Activated CD8-positive, alpha-beta T cell treated with anti-CD3 and anti-CD28 coated beads for 36 hours (primary cell): ENCODE measurements at regions of chr5 and their contacts with region 1.

Region 1: GRCh38 chr5:95646554-95647431 is at the start of gene RFESD:
- DNase-seq: peak; percentile 99
- ATAC-seq: peak; percentile 95
- H3K4me3 Mint-ChIP-seq: peak within 1 kb of the TSS; percentile 81
- H3K27ac Mint-ChIP-seq: peak within 1 kb of the TSS; percentile 90
- H3K4me1 Mint-ChIP-seq: peaks cover 36% of the 10 kb centered on the region
- H3K27me3 Mint-ChIP-seq: no peaks in the 10 kb centered on the region
- CTCF ChIP-seq: no peak
- total RNA-seq, gene RFESD: 9.2 to 9.8 TPM

Region 2: GRCh38 chr5:95600557-95600956 is 46.2 kb before region 1 on chr5:
- CTCF ChIA-PET with region 1: no interaction called
- POLR2A ChIA-PET with region 1: no interaction called
- intact Hi-C with region 1: no loop called
- DNase-seq: no peak
- ATAC-seq: no peak
- H3K4me3 Mint-ChIP-seq: no peak overlapping the region
- H3K27ac Mint-ChIP-seq: no peak overlapping the region
- H3K4me1 Mint-ChIP-seq: no peaks in the 10 kb centered on the region
- H3K27me3 Mint-ChIP-seq: no peaks in the 10 kb centered on the region
- CTCF ChIP-seq: no peak

Region 3: DNA sequence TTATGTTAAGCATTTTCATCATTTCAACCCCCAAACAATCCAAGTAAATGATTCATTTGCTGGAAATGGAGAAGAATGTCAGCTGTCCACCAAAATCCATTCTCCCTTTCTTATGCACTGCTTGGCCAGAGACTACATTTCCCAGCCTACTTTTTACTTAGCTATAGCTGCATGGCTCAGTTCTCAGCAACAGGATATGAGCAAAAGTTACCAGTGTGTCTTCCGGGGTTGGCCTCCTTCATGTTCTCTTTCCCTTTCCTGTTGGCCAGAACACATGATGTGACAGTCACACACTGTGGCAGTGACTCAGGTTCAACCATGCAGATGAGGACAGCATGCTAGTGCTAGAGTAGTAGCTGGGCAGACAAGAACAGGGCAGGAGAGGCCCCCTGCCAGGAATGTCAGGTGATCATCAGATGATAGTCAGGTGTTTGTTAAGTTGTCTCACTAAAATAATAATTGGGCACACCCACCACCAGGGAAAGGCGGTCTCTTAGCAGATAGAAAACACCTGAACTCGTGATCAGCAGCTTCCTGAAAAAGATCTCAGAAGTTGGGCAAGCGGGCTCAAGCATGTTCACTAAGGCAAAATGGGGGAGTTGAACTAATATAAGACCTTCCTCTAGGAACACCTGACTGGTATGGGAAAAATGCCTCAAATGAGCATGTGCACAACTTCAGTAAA is 14.7 kb before region 1 on chr5:
- CTCF ChIA-PET with region 1: interaction called, 15 read pairs
- POLR2A ChIA-PET with region 1: interaction called, 5 read pairs
- intact Hi-C with region 1: no loop called
- DNase-seq: peak; percentile 87
- ATAC-seq: peak; percentile 99
- H3K4me3 Mint-ChIP-seq: peak overlapping the region; percentile 34
- H3K27ac Mint-ChIP-seq: peak overlapping the region; percentile 96
- H3K4me1 Mint-ChIP-seq: peaks cover 18% of the 10 kb centered on the region
- H3K27me3 Mint-ChIP-seq: peaks cover 3% of the 10 kb centered on the region
- CTCF ChIP-seq: no peak

Region 4: DNA sequence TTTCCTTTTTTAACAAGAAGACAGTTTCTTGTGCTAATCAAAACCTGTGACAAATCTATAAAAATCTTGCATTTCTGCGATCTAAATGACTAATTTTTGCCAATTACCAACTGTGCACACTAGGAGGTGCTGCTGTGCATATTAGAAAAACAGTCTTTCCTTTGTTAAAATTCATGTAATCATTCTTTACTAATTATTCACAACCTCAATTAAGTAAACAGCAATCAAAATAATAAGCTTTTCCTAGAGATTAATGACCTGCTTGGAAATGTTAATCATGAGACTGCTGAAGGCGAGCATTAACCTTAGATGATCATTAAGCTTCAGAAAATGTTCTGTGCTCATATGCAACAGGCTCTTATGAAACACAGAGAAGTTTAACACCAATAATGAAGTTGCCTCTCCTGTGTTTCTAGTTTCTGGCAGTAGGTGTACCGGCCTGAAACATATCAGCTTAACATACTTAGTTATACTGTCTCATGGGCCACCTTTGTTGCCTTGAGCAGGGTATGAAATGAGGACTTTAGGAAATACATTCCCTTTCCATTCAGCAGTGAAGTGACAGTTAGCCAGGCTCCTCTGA is 17.5 kb after region 1 on chr5:
- CTCF ChIA-PET with region 1: interaction called, 47 read pairs
- POLR2A ChIA-PET with region 1: interaction called, 3 read pairs
- intact Hi-C with region 1: no loop called
- DNase-seq: peak; percentile 52
- ATAC-seq: peak; percentile 61
- H3K4me3 Mint-ChIP-seq: no peak overlapping the region
- H3K27ac Mint-ChIP-seq: no peak overlapping the region
- H3K4me1 Mint-ChIP-seq: peaks cover 3% of the 10 kb centered on the region
- H3K27me3 Mint-ChIP-seq: no peaks in the 10 kb centered on the region
- CTCF ChIP-seq: peak; percentile 92

Region 5: DNA sequence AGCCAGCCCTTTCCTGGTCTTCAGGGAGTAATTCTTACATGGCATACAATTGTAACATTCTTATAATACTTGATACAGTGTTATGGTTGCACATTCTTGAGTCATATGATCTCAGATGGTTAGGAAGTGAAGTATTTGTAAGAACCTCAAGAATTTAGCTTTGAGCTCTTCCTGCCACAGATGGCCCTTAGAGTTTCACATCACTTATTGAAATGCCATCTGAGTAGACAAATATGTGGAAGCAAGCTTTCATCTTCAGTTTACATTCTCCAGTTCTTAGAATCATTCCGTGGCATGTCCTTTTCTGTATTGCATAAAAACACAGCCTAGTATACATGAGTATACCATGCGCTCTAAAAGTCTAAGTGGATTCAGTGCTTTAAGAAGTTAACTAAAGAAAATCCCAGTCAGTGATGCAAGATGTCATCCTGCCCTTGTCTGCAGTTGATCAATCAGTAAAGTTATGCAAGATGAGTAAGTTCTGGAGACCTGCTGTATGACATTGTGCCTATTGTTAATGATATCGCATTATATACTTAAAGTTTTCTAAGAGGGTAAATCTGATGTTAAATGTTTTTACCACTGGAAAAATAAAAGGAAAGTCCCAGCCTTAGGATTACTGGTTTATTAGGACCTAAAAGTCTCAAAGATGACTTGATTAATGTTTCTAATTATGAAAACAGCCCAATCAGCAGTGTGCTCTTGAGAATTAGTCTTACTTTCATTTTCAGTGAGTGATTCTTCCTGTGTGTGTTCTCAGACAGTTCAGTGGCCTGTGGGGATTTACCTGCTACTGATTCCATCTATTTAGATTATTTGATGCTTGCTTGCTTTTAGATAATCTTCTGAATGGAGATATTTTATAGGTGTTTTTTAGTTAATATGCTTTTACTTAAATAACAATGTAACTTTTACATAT is 113.7 kb after region 1 on chr5:
- CTCF ChIA-PET with region 1: no interaction called
- POLR2A ChIA-PET with region 1: no interaction called
- intact Hi-C with region 1: loop called (anchors 2 kb)
- DNase-seq: peak; percentile 51
- ATAC-seq: peak; percentile 89
- H3K4me3 Mint-ChIP-seq: peak overlapping the region; percentile 66
- H3K27ac Mint-ChIP-seq: peak overlapping the region; percentile 90
- H3K4me1 Mint-ChIP-seq: peaks cover 29% of the 10 kb centered on the region
- H3K27me3 Mint-ChIP-seq: no peaks in the 10 kb centered on the region
- CTCF ChIP-seq: no peak

Region 6: GRCh38 chr5:95822542-95823181 is 175.9 kb after region 1 on chr5 and contains the start of gene GLRX:
- CTCF ChIA-PET with region 1: interaction called, 3 read pairs
- POLR2A ChIA-PET with region 1: interaction called, 5 read pairs
- intact Hi-C with region 1: loop called (anchors 5 kb)
- DNase-seq: peak; percentile 73
- ATAC-seq: peak; percentile 15
- H3K4me3 Mint-ChIP-seq: peak within 1 kb of the TSS; percentile 87
- H3K27ac Mint-ChIP-seq: peak within 1 kb of the TSS; percentile 93
- H3K4me1 Mint-ChIP-seq: peaks cover 44% of the 10 kb centered on the region
- H3K27me3 Mint-ChIP-seq: no peaks in the 10 kb centered on the region
- CTCF ChIP-seq: no peak
- total RNA-seq, gene GLRX: 28.4 to 32.6 TPM